ENCODE measurements at regions of chr13 and their contacts with region 1.

Region 1: DNA sequence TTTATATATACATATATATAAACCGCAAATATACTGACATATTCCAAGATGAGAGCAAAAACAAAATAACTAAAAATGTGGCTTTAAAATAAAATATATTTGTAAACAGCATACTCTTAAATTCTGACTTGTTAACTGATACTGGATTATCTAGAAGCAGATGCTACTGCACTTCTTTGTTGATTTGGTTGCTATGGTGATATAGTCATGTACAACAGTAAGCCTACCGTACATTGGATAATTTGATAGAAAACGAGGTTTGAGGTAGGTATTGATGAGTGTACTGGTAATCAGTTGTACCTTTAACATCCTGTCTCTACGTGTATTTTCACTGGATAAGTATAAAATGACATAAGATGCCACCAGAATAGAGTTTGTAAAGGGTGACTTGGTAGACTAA is 57.4 kb downstream of the FNDC3A start:
- DNase-seq: no peak
- ATAC-seq: no peak
- H3K4me3 ChIP-seq: no peak overlapping the region
- H3K4me3 Mint-ChIP-seq: no peak overlapping the region
- H3K27ac ChIP-seq: no peak overlapping the region
- H3K27ac Mint-ChIP-seq: peak overlapping the region; percentile 38
- H3K4me1 ChIP-seq: no peaks in the 10 kb centered on the region
- H3K4me1 Mint-ChIP-seq: no peaks in the 10 kb centered on the region
- H3K27me3 ChIP-seq: no peaks in the 10 kb centered on the region
- H3K27me3 Mint-ChIP-seq: no peaks in the 10 kb centered on the region
- CTCF ChIP-seq: no peak

Region 2: GRCh38 chr13:50512474-50513299 is 1479.6 kb after region 1 on chr13:
- CTCF ChIA-PET with region 1: no interaction called
- POLR2A ChIA-PET with region 1: no interaction called
- intact Hi-C with region 1: loop called in 1 of 2 experiments (anchors 5 kb)
- DNase-seq: peak; percentile 16 to 73 (median 36)
- ATAC-seq: peak; percentile 62
- H3K4me3 ChIP-seq: peak overlapping the region; percentile 40 to 53
- H3K4me3 Mint-ChIP-seq: no peak overlapping the region
- H3K27ac ChIP-seq: peak overlapping the region; percentile 51 to 71
- H3K27ac Mint-ChIP-seq: no peak overlapping the region
- H3K4me1 ChIP-seq: peaks cover 18% of the 10 kb centered on the region
- H3K4me1 Mint-ChIP-seq: no peaks in the 10 kb centered on the region
- H3K27me3 ChIP-seq: no peaks in the 10 kb centered on the region
- H3K27me3 Mint-ChIP-seq: no peaks in the 10 kb centered on the region
- CTCF ChIP-seq: no peak